Aorta (tissue), 5 donors: ENCODE measurements at regions of chr3 and their contacts with region 1.

Region 1: GRCh38 chr3:148911173-148911572 is 46.1 kb downstream of the CPA3 start:
- DNase-seq: no peak
- ATAC-seq: no peak
- H3K4me3 ChIP-seq: no peak overlapping the region
- H3K27ac ChIP-seq: no peak overlapping the region
- H3K4me1 ChIP-seq: no peaks in the 10 kb centered on the region
- H3K27me3 ChIP-seq: no peaks in the 10 kb centered on the region

Region 2: GRCh38 chr3:147458995-147459704 is 1452.0 kb before region 1 on chr3:
- intact Hi-C with region 1: loop called in 1 of 2 experiments (anchors 10 kb)
- DNase-seq: no peak
- ATAC-seq: no peak
- H3K4me3 ChIP-seq: no peak overlapping the region
- H3K27ac ChIP-seq: no peak overlapping the region
- H3K4me1 ChIP-seq: no peaks in the 10 kb centered on the region
- H3K27me3 ChIP-seq: no peaks in the 10 kb centered on the region

Region 3: GRCh38 chr3:148510116-148510515 is 401.1 kb before region 1 on chr3:
- intact Hi-C with region 1: no loop called
- DNase-seq: no peak
- ATAC-seq: no peak
- H3K4me3 ChIP-seq: no peak overlapping the region
- H3K27ac ChIP-seq: no peak overlapping the region
- H3K4me1 ChIP-seq: no peaks in the 10 kb centered on the region
- H3K27me3 ChIP-seq: no peaks in the 10 kb centered on the region

Region 4: DNA sequence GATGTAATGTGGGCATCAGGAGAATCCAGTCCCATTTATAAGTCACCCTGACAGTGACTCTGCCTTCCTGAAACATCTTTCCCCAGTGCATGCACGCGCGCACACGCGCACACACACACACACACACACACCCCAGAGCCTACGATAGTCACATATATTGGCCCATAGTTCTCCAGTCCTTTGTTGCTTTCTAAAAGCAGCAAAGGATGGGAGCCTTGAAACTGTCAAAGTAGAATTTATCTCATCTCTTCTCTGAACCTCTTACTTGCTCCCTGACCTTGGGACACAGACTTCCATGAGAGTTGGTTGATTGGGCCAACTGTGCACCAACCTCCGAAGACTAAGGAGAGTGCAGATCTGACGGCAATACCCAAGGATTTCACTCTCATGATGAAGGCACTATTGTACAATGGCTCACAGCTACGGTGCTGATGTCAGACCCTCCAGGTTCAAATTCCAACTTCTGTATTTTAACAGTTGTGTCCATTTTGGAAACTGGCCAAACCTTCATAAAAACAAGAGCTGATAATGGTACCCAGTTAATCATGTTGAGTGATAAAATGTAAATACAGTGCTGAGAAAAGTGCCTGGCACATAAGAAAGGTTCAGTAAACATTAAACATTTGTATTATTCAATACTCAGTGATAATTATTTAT is 37.8 kb before region 1 on chr3:
- intact Hi-C with region 1: no loop called
- DNase-seq: no peak
- ATAC-seq: no peak
- H3K4me3 ChIP-seq: no peak overlapping the region
- H3K27ac ChIP-seq: no peak overlapping the region
- H3K4me1 ChIP-seq: no peaks in the 10 kb centered on the region
- H3K27me3 ChIP-seq: no peaks in the 10 kb centered on the region